Transverse colon (tissue), 4 donors: ENCODE measurements at regions of chr10 and their contacts with region 1.

Region 1: GRCh38 chr10:71009126-71009525 is 120.8 kb upstream of the PCBD1 start:
- DNase-seq: no peak
- H3K4me3 ChIP-seq: no peak overlapping the region
- H3K27ac ChIP-seq: no peak overlapping the region
- H3K4me1 ChIP-seq: no peaks in the 10 kb centered on the region
- H3K27me3 ChIP-seq: no peaks in the 10 kb centered on the region
- CTCF ChIP-seq: no peak
- EP300 ChIP-seq: no peak
- POLR2A ChIP-seq: no peak

Region 2: GRCh38 chr10:71138166-71138830 is 129.2 kb after region 1 on chr10:
- in situ Hi-C with region 1: no loop called
- intact Hi-C with region 1: loop called (anchors 10 kb)
- DNase-seq: no peak
- H3K4me3 ChIP-seq: no peak overlapping the region
- H3K27ac ChIP-seq: no peak overlapping the region
- H3K4me1 ChIP-seq: no peaks in the 10 kb centered on the region
- H3K27me3 ChIP-seq: no peaks in the 10 kb centered on the region
- CTCF ChIP-seq: no peak
- EP300 ChIP-seq: no peak
- POLR2A ChIP-seq: no peak